ENCODE measurements at regions of chr7 and their contacts with region 1.

Region 1: DNA sequence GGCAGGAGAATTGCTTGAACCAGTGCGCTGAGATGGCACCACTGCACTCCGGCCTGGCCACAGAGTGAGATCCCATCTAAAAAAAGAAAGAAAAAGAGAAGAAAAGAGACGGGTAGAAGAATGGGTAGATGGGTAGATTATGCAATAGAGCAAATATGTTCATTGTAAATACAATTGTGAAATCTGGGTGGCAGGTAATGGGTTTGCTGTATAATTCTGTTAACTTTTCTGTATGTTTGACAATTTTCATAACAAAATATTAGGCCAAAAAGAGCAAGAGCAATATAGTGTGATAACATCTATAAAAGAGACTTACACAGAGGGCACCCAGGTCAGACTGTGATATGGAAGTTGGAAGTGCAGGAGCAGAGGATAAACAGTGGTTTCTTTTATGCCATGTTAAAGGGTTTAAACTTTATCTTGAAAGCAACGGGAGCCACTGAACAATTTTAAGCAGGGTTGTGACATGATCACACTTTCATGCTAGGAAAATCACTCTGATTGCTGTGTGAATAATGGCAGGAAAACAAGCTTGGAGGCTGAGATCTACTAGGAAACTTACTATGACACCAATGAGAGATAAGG is 6.7 kb upstream of the COL28A1 start:
- DNase-seq: no peak
- ATAC-seq: no peak
- H3K4me3 ChIP-seq: no peak overlapping the region
- H3K27ac ChIP-seq: 0 out of 6 replicates have a peak overlapping the region, but pooled peaks of 1 of the 2 experiments have one; percentile 26
- H3K4me1 ChIP-seq: peaks cover 12% of the 10 kb centered on the region
- CTCF ChIP-seq: no peak
- EP300 ChIP-seq: no peak
- POLR2A ChIP-seq: no peak
- RAD21 ChIP-seq: no peak

Region 2: GRCh38 chr7:7553386-7553785 is 11.0 kb after region 1 on chr7:
- CTCF ChIA-PET with region 1: interaction called, 16 read pairs
- POLR2A ChIA-PET with region 1: no interaction called
- DNase-seq: no peak
- ATAC-seq: no peak
- H3K4me3 ChIP-seq: no peak overlapping the region
- H3K27ac ChIP-seq: no peak overlapping the region
- H3K4me1 ChIP-seq: peaks cover 9% of the 10 kb centered on the region; the same call in 2 of the 3 replicates
- CTCF ChIP-seq: no peak
- EP300 ChIP-seq: no peak
- POLR2A ChIP-seq: no peak
- RAD21 ChIP-seq: no peak

Region 3: GRCh38 chr7:7607010-7607409 is 64.7 kb after region 1 on chr7:
- CTCF ChIA-PET with region 1: no interaction called
- POLR2A ChIA-PET with region 1: no interaction called
- DNase-seq: no peak
- ATAC-seq: no peak
- H3K4me3 ChIP-seq: no peak overlapping the region
- H3K27ac ChIP-seq: no peak overlapping the region
- H3K4me1 ChIP-seq: no peaks in the 10 kb centered on the region
- CTCF ChIP-seq: no peak
- EP300 ChIP-seq: no peak
- POLR2A ChIP-seq: no peak
- RAD21 ChIP-seq: no peak